H1 (cell line): ENCODE measurements at regions of chr10 and their contacts with region 1.

Region 1: DNA sequence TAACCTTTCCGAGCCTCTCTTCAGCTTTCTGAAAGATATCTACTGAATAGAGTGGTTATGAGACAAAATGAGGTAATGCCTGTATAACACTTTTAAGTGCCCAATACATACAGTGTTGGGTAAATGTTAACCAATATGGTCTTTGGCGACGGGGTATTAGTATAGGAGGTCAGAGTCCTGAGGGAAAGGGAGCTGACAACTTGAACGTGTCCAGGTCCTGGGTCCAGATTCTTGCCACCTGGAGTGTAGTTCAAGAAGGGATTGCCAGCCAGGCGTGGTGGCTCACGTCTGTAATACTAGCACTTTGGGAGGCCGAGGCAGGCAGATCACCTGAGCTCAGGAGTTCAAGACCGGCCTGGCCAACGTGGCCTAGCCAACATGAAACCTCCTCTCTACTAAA is 76.0 kb downstream of the ZFAND4 start:
- DNase-seq: no peak
- H3K4me3 ChIP-seq: no peak overlapping the region
- H3K27ac ChIP-seq: no peak overlapping the region
- H3K4me1 ChIP-seq: no peaks in the 10 kb centered on the region; a peak in 1 of 7 replicates
- H3K27me3 ChIP-seq: peaks cover 0 to 2% (median 0%) of the 10 kb centered on the region in 4 experiments; a peak in 1 of 7 replicates
- CTCF ChIP-seq: no peak
- EP300 ChIP-seq: no peak
- POLR2A ChIP-seq: no peak
- RAD21 ChIP-seq: no peak

Region 2: DNA sequence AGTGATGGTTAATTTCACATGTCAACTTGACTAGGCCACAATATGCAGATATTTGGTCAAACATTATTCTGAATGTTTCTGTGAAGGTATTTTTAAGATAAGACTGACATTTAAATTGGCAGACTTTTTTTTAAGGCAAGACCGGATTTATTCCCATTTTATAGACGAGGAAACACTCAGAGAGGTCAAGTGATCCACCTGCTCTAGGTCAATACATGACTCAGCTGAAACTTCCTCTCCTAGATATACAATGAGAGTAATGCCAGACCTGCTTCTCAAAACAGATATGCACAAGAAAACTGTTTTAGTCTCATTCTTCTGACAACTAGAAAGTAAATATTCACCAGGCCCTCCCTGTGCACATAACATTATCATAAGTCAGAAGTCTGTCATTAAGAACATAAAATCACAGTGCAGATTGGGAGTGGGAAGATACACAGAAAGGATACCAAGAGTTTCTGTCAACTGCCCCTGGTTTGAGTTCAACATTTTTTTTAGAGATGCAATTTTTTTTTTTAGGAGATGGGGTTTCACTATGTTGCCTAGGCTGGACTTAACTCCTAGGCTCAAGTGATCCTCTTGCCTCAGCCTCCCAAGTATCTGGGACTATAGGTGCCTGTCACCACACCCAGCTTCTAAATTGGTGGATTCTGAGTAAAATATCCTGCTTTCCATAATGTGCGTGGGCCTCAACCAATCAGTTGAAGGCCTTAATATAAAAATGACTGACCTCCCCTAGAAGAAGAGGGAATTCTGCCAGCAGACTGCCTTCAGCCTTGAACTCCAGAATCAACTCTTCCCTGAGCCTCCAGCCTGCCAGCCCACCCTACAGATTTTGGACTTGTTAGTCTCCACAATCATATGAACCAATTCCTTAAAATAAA is 45.4 kb before region 1 on chr10:
- CTCF ChIA-PET with region 1: no interaction called
- POLR2A ChIA-PET with region 1: no interaction called
- DNase-seq: no peak
- H3K4me3 ChIP-seq: no peak overlapping the region
- H3K27ac ChIP-seq: no peak overlapping the region
- H3K4me1 ChIP-seq: no peaks in the 10 kb centered on the region
- H3K27me3 ChIP-seq: no peaks in the 10 kb centered on the region
- CTCF ChIP-seq: no peak
- EP300 ChIP-seq: no peak
- POLR2A ChIP-seq: no peak
- RAD21 ChIP-seq: no peak

Region 3: GRCh38 chr10:45607276-45607675 is 10.8 kb after region 1 on chr10:
- CTCF ChIA-PET with region 1: no interaction called
- POLR2A ChIA-PET with region 1: interaction called, 11 read pairs
- DNase-seq: no peak
- H3K4me3 ChIP-seq: no peak overlapping the region
- H3K27ac ChIP-seq: no peak overlapping the region
- H3K4me1 ChIP-seq: peaks cover 0 to 2% (median 0%) of the 10 kb centered on the region in 4 experiments; a peak in 1 of 7 replicates
- H3K27me3 ChIP-seq: no peaks in the 10 kb centered on the region
- CTCF ChIP-seq: no peak
- EP300 ChIP-seq: no peak
- POLR2A ChIP-seq: no peak
- RAD21 ChIP-seq: no peak